Sciatic nerve (tissue), 2 donors: ENCODE measurements at regions of chr19 and their contacts with region 1.

Region 1: GRCh38 chr19:48795055-48795684 is 15.7 kb downstream of the BCAT2 start:
- DNase-seq: peak; percentile 94
- ATAC-seq: peak; percentile 97

Region 2: GRCh38 chr19:47682939-47683338 is 1112.2 kb before region 1 on chr19:
- intact Hi-C with region 1: no loop called
- DNase-seq: no peak
- ATAC-seq: no peak

Region 3: DNA sequence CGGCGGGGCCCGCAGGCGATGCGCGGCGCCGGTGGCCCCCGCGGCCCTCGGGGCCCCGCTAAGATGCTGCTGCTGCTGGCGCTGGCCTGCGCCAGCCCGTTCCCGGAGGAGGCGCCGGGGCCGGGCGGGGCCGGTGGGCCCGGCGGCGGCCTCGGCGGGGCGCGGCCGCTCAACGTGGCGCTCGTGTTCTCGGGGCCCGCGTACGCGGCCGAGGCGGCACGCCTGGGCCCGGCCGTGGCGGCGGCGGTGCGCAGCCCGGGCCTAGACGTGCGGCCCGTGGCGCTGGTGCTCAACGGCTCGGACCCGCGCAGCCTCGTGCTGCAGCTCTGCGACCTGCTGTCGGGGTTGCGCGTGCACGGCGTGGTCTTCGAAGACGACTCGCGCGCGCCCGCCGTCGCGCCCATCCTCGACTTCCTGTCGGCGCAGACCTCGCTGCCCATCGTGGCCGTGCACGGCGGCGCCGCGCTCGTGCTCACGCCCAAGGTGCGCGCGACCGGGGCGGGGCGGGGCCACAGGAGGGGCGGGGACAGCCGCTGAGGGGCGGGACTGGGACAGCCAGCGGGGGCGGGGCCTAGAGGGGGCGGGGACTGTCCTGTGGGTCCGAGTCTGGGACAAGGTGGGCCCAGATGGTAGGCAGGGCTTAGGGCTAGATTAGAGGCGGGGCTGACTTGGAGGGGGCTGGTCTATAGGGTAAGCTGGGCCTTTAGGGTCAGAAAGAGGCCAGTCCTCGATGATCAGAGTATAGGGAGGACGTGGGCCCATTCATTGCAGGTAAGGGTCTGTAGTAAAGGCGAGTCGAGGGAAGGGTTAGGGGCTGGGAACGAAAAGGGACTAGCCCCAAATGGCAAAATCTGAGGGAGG is 396.6 kb before region 1 on chr19:
- intact Hi-C with region 1: no loop called
- DNase-seq: peak; percentile 85
- ATAC-seq: peak; percentile 58

Region 4: GRCh38 chr19:48835734-48836088 is 40.5 kb after region 1 on chr19:
- intact Hi-C with region 1: loop called (anchors 5 kb)
- DNase-seq: peak; percentile 97
- ATAC-seq: peak; percentile 93

Region 5: DNA sequence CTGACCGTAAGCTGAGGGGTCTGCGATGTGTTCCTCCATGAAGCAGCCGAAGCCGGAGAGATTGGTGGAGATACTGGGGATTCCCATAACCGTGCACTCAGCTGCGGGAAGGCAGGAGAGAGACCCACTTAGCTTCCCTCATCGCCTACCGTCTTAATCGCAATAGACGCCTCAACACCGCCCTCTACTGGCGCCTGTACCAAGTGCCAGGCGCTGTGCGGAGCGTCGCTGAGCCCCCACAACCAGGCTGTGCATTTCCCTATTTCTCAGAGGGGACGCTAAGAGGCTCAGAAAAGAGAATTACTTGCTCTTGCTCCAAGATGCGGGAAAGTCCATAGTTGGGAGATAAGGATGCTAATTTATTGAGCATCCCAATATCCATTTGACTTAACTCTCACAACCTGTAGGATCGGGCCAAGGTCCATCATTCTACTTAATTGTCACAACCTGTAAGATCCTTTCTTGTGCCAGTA is 175.8 kb after region 1 on chr19:
- intact Hi-C with region 1: loop called (anchors 2 kb)
- DNase-seq: peak; percentile 93
- ATAC-seq: peak; percentile 58